ENCODE measurements at regions of chr2 and their contacts with region 1.

Region 1: GRCh38 chr2:127355386-127356008 is 32.3 kb downstream of the MAP3K2 start:
- DNase-seq: peak; percentile 28
- H3K4me3 ChIP-seq: no peak overlapping the region
- H3K27ac ChIP-seq: no peak overlapping the region
- H3K4me1 ChIP-seq: no peaks in the 10 kb centered on the region
- H3K27me3 ChIP-seq: no peaks in the 10 kb centered on the region
- CTCF ChIP-seq: peak; percentile 74 to 82

Region 2: GRCh38 chr2:127270636-127271035 is 84.9 kb before region 1 on chr2:
- CTCF ChIA-PET with region 1: no interaction called
- dilution Hi-C with region 1: no loop called
- in situ Hi-C with region 1: no loop called
- intact Hi-C with region 1: no loop called
- DNase-seq: no peak
- H3K4me3 ChIP-seq: no peak overlapping the region
- H3K27ac ChIP-seq: no peak overlapping the region
- H3K4me1 ChIP-seq: no peaks in the 10 kb centered on the region
- H3K27me3 ChIP-seq: no peaks in the 10 kb centered on the region
- CTCF ChIP-seq: peak in 1 of 2 donors; percentile 23

Region 3: GRCh38 chr2:127479219-127479825 is 123.8 kb after region 1 on chr2:
- CTCF ChIA-PET with region 1: no interaction called
- dilution Hi-C with region 1: no loop called
- in situ Hi-C with region 1: no loop called
- intact Hi-C with region 1: loop called (anchors 1 kb)
- DNase-seq: peak; percentile 12
- H3K4me3 ChIP-seq: no peak overlapping the region
- H3K27ac ChIP-seq: no peak overlapping the region
- H3K4me1 ChIP-seq: no peaks in the 10 kb centered on the region
- H3K27me3 ChIP-seq: no peaks in the 10 kb centered on the region
- CTCF ChIP-seq: peak; percentile 68 to 71

Measured in mammary epithelial cell (primary cell).